CD8-positive, alpha-beta T cell (primary cell): ENCODE measurements at regions of chr18 and their contacts with region 1.

Region 1: GRCh38 chr18:596288-596881 is 403 bp upstream of the CLUL1 start:
- DNase-seq: peak in 4 of 9 experiments; percentile 63 to 81 (median 70)
- ATAC-seq: peak; percentile 66
- H3K4me3 ChIP-seq: no peak overlapping the region
- H3K4me3 Mint-ChIP-seq: peak overlapping the region; percentile 57
- H3K27ac ChIP-seq: no peak overlapping the region
- H3K27ac Mint-ChIP-seq: peak overlapping the region; percentile 52
- H3K4me1 ChIP-seq: peaks cover 11% of the 10 kb centered on the region
- H3K4me1 Mint-ChIP-seq: peaks cover 12% of the 10 kb centered on the region
- H3K27me3 ChIP-seq: peaks cover 0 to 5% of the 10 kb centered on the region in 2 experiments
- H3K27me3 Mint-ChIP-seq: peaks cover 31% of the 10 kb centered on the region
- CTCF ChIP-seq: no peak

Region 2: GRCh38 chr18:111292-112014 is 484.9 kb before region 1 on chr18:
- CTCF ChIA-PET with region 1: no interaction called
- POLR2A ChIA-PET with region 1: no interaction called
- intact Hi-C with region 1: loop called in 1 of 2 experiments (anchors 5 kb)
- DNase-seq: peak; percentile 60 to 88 (median 69)
- ATAC-seq: peak; percentile 60
- H3K4me3 ChIP-seq: peak overlapping the region in 1 of 2 experiments; percentile 19
- H3K4me3 Mint-ChIP-seq: peak overlapping the region; percentile 86
- H3K27ac ChIP-seq: peak overlapping the region in 1 of 2 experiments; percentile 44
- H3K27ac Mint-ChIP-seq: peak overlapping the region; percentile 94
- H3K4me1 ChIP-seq: peaks cover 6% of the 10 kb centered on the region
- H3K4me1 Mint-ChIP-seq: peaks cover 8% of the 10 kb centered on the region
- H3K27me3 ChIP-seq: no peaks in the 10 kb centered on the region
- H3K27me3 Mint-ChIP-seq: no peaks in the 10 kb centered on the region
- CTCF ChIP-seq: no peak

Region 3: GRCh38 chr18:199768-200167 is 396.6 kb before region 1 on chr18:
- CTCF ChIA-PET with region 1: no interaction called
- POLR2A ChIA-PET with region 1: no interaction called
- intact Hi-C with region 1: no loop called
- DNase-seq: no peak
- ATAC-seq: no peak
- H3K4me3 ChIP-seq: no peak overlapping the region
- H3K4me3 Mint-ChIP-seq: no peak overlapping the region
- H3K27ac ChIP-seq: no peak overlapping the region
- H3K27ac Mint-ChIP-seq: no peak overlapping the region
- H3K4me1 ChIP-seq: no peaks in the 10 kb centered on the region
- H3K4me1 Mint-ChIP-seq: peaks cover 10% of the 10 kb centered on the region
- H3K27me3 ChIP-seq: no peaks in the 10 kb centered on the region
- H3K27me3 Mint-ChIP-seq: no peaks in the 10 kb centered on the region
- CTCF ChIP-seq: no peak

Region 4: GRCh38 chr18:267688-268552 is 328.5 kb before region 1 on chr18 and contains the start of gene THOC1:
- CTCF ChIA-PET with region 1: no interaction called
- POLR2A ChIA-PET with region 1: no interaction called
- intact Hi-C with region 1: loop called in 1 of 2 experiments (anchors 5 kb)
- DNase-seq: peak; percentile 87 to 96 (median 95)
- ATAC-seq: peak; percentile 90
- H3K4me3 ChIP-seq: peak within 1 kb of the TSS; percentile 90 to 98
- H3K4me3 Mint-ChIP-seq: peak within 1 kb of the TSS; percentile 99
- H3K27ac ChIP-seq: peak within 1 kb of the TSS; percentile 93 to 99
- H3K27ac Mint-ChIP-seq: peak within 1 kb of the TSS; percentile 100
- H3K4me1 ChIP-seq: peaks cover 12% of the 10 kb centered on the region
- H3K4me1 Mint-ChIP-seq: peaks cover 44% of the 10 kb centered on the region
- H3K27me3 ChIP-seq: no peaks in the 10 kb centered on the region
- H3K27me3 Mint-ChIP-seq: no peaks in the 10 kb centered on the region
- CTCF ChIP-seq: no peak
- total RNA-seq, gene THOC1: 114 to 128 TPM

Region 5: DNA sequence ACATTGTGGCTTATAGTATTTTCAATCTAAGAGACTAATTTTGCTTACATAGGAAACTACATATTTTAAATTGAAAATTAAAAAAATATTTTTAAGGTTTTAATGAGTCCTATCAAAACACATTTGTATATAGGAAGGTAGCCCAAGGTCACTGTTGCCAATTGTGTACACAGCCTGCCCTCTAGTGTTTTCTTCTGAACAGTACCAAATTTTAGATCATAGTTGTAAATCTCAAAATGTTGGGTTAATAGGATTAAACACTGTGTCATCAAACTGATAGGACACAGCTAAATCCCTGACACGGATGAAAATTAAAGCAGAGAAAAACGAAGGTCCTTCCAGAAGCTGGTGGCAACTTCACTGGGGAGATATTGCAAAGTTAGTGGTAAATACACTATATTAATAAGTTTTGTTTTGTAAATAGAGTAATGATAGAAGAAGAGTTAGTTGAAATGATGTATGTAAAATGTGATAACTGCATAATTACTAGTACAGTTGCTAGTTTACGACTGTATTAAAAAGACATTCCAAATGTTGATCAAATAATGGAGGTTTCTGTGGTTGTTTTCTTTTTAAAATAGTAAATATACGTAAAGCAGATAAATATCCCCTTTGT is 20.1 kb after region 1 on chr18:
- CTCF ChIA-PET with region 1: interaction called, 4 read pairs
- POLR2A ChIA-PET with region 1: no interaction called
- intact Hi-C with region 1: loop called in 1 of 2 experiments (anchors 2 kb)
- DNase-seq: peak in 2 of 9 experiments; percentile 36 to 52
- ATAC-seq: peak; percentile 58
- H3K4me3 ChIP-seq: no peak overlapping the region
- H3K4me3 Mint-ChIP-seq: no peak overlapping the region
- H3K27ac ChIP-seq: no peak overlapping the region
- H3K27ac Mint-ChIP-seq: no peak overlapping the region
- H3K4me1 ChIP-seq: no peaks in the 10 kb centered on the region
- H3K4me1 Mint-ChIP-seq: no peaks in the 10 kb centered on the region
- H3K27me3 ChIP-seq: no peaks in the 10 kb centered on the region
- H3K27me3 Mint-ChIP-seq: peaks cover 2% of the 10 kb centered on the region
- CTCF ChIP-seq: peak; percentile 47

Region 6: DNA sequence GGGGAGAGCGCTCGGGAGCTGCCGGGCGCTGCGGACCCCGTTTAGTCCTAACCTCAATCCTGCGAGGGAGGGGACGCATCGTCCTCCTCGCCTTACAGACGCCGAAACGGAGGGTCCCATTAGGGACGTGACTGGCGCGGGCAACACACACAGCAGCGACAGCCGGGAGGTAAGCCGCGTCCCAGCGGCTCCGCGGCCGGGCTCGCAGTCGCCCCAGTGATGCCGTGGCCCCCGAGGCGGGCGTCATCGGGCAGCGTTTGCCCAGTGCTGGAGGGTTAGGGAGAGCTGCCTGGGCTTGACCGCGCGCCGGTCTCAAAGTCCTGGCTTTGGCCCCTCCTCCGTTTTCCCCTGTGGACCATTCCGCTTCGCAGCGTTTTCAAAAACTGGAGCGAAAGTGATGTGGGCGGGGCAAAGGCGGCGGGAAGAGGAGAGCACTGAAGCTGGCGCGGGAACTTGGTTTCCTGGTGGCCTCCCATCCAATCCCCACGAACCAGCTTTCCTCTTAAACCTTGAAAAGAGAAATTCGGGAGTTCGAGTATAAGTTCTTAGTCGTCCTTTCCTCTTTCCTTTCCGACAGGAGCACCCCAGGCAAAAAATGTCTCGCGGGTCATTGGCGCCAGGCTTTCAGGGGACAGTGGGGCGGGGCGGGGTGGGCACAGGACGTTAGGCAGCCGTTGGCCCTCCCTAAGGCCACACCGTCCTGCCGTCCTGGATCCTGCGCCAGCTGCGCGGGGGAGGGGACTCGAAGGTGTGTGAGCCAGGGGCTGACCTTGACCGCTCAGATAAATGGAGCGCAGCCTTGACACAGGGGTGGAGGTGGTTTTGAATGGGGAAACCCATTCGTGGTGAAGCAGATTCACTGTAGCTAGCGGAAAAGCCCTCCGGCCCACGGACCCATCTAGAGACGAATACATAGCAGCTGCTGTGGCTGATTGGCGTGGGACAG is 61.9 kb after region 1 on chr18:
- CTCF ChIA-PET with region 1: no interaction called
- POLR2A ChIA-PET with region 1: no interaction called
- intact Hi-C with region 1: loop called in 1 of 2 experiments (anchors 5 kb)
- DNase-seq: peak in 6 of 9 experiments; percentile 28 to 65 (median 44)
- ATAC-seq: peak; percentile 53
- H3K4me3 ChIP-seq: peak overlapping the region; percentile 69
- H3K4me3 Mint-ChIP-seq: peak overlapping the region; percentile 85
- H3K27ac ChIP-seq: no peak overlapping the region
- H3K27ac Mint-ChIP-seq: no peak overlapping the region
- H3K4me1 ChIP-seq: peaks cover 6% of the 10 kb centered on the region
- H3K4me1 Mint-ChIP-seq: peaks cover 10% of the 10 kb centered on the region
- H3K27me3 ChIP-seq: peaks cover 4 to 12% of the 10 kb centered on the region in 2 experiments
- H3K27me3 Mint-ChIP-seq: peaks cover 40% of the 10 kb centered on the region
- CTCF ChIP-seq: no peak

Region 7: DNA sequence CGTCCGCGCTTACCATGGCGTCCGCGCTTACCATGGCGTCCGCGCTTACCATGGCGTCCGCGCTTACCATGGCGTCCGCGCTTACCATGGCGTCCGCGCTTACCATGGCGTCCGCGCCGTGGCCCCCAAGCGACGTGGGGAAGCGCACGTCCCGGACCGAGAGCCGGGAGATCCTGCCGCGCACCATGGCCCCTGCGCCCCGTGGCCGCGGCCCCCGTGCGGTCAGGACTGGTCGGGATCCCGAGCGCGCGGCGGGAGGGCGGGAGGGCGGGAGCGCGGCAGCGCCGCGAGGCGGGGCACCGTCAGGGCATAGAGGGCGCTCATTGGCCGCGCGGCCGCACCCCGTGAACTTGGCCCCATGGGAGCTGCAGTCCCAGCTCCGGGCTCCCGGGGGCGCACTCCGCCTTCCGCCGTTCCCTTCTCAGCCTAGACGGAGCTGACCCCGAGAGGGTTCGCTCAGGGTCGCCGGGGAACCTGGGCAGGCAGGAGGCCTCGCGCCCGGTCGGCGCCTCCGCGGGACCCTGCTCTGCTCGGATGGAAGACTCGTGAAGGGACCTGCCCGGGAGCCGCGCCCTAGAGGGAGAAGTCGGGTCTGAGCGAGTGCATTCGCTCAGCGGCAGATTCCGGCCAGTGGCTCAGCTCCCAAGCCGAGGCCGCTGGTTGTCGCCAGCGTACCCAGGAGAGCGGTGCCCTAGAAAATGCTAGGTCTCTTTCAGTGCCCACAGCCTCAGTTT is 116.2 kb after region 1 on chr18 and contains the start of gene ENOSF1:
- CTCF ChIA-PET with region 1: no interaction called
- POLR2A ChIA-PET with region 1: no interaction called
- intact Hi-C with region 1: loop called (anchors 2 to 5 kb)
- DNase-seq: peak; percentile 68 to 90 (median 78)
- ATAC-seq: peak; percentile 76
- H3K4me3 ChIP-seq: peak within 1 kb of the TSS; percentile 87 to 92
- H3K4me3 Mint-ChIP-seq: peak within 1 kb of the TSS; percentile 84
- H3K27ac ChIP-seq: peak within 1 kb of the TSS; percentile 83 to 96
- H3K27ac Mint-ChIP-seq: peak within 1 kb of the TSS; percentile 93
- H3K4me1 ChIP-seq: peaks cover 17% of the 10 kb centered on the region
- H3K4me1 Mint-ChIP-seq: peaks cover 32% of the 10 kb centered on the region
- H3K27me3 ChIP-seq: no peaks in the 10 kb centered on the region
- H3K27me3 Mint-ChIP-seq: no peaks in the 10 kb centered on the region
- CTCF ChIP-seq: peak; percentile 67
- total RNA-seq, gene ENOSF1: 32.2 to 39.7 TPM